ENCODE measurements at regions of chr18 and their contacts with region 1.

Region 1: GRCh38 chr18:43265465-43265864 is 11.8 kb downstream of the SYT4 start:
- DNase-seq: no peak
- H3K4me3 ChIP-seq: no peak overlapping the region
- H3K27ac ChIP-seq: no peak overlapping the region
- H3K4me1 ChIP-seq: no peaks in the 10 kb centered on the region
- H3K27me3 ChIP-seq: no peaks in the 10 kb centered on the region
- CTCF ChIP-seq: no peak

Region 2: DNA sequence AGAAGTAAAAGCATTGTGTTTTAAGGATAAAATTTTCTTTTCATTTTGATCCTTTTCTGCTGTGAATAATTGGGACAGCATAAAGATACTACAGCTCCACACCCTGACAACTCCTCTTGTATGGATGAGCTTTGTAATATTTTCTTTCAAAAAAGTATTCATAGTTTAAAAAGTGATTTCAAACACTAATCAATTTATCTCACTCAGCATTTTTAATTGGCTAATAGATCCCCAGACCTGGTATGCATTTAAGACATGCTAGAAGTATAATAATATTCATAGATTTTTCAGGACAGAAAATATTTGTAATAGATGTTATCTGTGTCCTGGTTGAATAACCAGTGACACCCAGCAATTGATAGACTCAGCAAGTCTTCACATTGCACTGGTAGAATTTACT is 660.6 kb before region 1 on chr18:
- intact Hi-C with region 1: loop called (anchors 5 kb)
- DNase-seq: no peak
- H3K4me3 ChIP-seq: no peak overlapping the region
- H3K27ac ChIP-seq: no peak overlapping the region
- H3K4me1 ChIP-seq: no peaks in the 10 kb centered on the region
- H3K27me3 ChIP-seq: no peaks in the 10 kb centered on the region
- CTCF ChIP-seq: no peak